Endothelial cell of umbilical vein (primary cell): ENCODE measurements at regions of chr17 and their contacts with region 1.

Region 1: GRCh38 chr17:33080091-33080490 is 88.4 kb downstream of the SPACA3 start:
- DNase-seq: no peak
- H3K4me3 ChIP-seq: no peak overlapping the region
- H3K27ac ChIP-seq: no peak overlapping the region
- H3K4me1 ChIP-seq: no peaks in the 10 kb centered on the region
- H3K27me3 ChIP-seq: no peaks in the 10 kb centered on the region
- CTCF ChIP-seq: no peak
- POLR2A ChIP-seq: no peak

Region 2: GRCh38 chr17:33113276-33113990 is 33.3 kb after region 1 on chr17:
- CTCF ChIA-PET with region 1: no interaction called
- POLR2A ChIA-PET with region 1: no interaction called
- dilution Hi-C with region 1: no loop called
- intact Hi-C with region 1: loop called (anchors 2 kb)
- DNase-seq: no peak
- H3K4me3 ChIP-seq: no peak overlapping the region
- H3K27ac ChIP-seq: no peak overlapping the region
- H3K4me1 ChIP-seq: no peaks in the 10 kb centered on the region
- H3K27me3 ChIP-seq: no peaks in the 10 kb centered on the region
- CTCF ChIP-seq: no peak
- POLR2A ChIP-seq: no peak